ENCODE measurements at regions of chr14 and their contacts with region 1.

Region 1: DNA sequence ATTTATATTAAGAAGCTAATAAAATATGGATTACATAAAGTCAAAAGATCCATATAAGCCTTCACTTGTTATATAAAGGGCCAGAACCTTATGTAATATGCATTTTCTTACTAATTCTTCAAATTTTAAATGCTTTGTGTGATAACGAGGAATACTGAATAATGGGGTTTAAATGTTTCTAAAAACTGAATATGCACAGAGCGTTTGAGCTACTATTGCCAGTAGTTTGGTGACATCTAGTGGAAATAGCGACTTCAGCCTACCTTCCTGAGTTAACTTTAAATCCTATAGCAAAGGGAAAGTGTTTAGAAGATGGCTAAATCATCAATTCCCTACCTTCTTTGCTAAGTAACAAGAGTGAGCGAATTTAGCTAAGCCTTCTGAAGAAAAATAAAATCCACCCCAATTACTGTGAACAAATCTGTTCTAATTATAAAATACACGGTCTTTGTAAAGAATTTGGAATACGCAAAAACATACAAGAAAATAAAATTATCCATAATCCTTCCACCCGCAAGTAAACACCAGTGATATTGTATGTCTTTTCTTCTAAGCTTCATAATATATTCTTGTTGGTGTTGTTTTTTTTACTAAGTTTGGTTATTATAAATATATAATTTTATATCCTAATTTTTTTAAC is 115.5 kb upstream of the G2E3 start:
- DNase-seq: no peak
- H3K4me3 ChIP-seq: no peak overlapping the region
- H3K27ac ChIP-seq: no peak overlapping the region
- H3K4me1 ChIP-seq: peaks cover 0 to 5% (median 2%) of the 10 kb centered on the region in 4 experiments; a peak in 2 of 7 replicates
- H3K27me3 ChIP-seq: no peaks in the 10 kb centered on the region
- CTCF ChIP-seq: peak in 2 of 3 experiments; percentile 66 to 72; a peak in 3 of 4 replicates
- EP300 ChIP-seq: no peak
- POLR2A ChIP-seq: no peak
- RAD21 ChIP-seq: peak; percentile 95

Region 2: GRCh38 chr14:30431552-30431951 is 11.9 kb before region 1 on chr14:
- CTCF ChIA-PET with region 1: interaction called, 11 read pairs
- POLR2A ChIA-PET with region 1: no interaction called
- DNase-seq: no peak
- H3K4me3 ChIP-seq: no peak overlapping the region
- H3K27ac ChIP-seq: no peak overlapping the region
- H3K4me1 ChIP-seq: peaks cover 0 to 3% (median 0%) of the 10 kb centered on the region in 4 experiments; a peak in 2 of 7 replicates
- H3K27me3 ChIP-seq: no peaks in the 10 kb centered on the region
- CTCF ChIP-seq: no peak
- EP300 ChIP-seq: no peak
- POLR2A ChIP-seq: no peak
- RAD21 ChIP-seq: no peak

Measured in H1 (cell line).